Uterus (tissue), 4 donors: ENCODE measurements at regions of chr15 and their contacts with region 1.

Region 1: GRCh38 chr15:99704444-99704838 is 28.8 kb downstream of the LYSMD4 start:
- DNase-seq: peak in 1 of 2 donors; percentile 68
- H3K4me3 ChIP-seq: no peak overlapping the region
- H3K27ac ChIP-seq: peak overlapping the region; percentile 91 to 98
- H3K4me1 ChIP-seq: peaks cover 0 to 11% of the 10 kb centered on the region in 2 donors
- H3K27me3 ChIP-seq: no peaks in the 10 kb centered on the region
- CTCF ChIP-seq: peak; percentile 62 to 93 (median 79)
- POLR2A ChIP-seq: no peak

Region 2: GRCh38 chr15:99565299-99566156 is 138.9 kb before region 1 on chr15 and contains the start of gene MEF2A:
- intact Hi-C with region 1: loop called (anchors 10 kb)
- DNase-seq: peak; percentile 95
- H3K4me3 ChIP-seq: peak within 1 kb of the TSS; percentile 66 to 83
- H3K27ac ChIP-seq: peak within 1 kb of the TSS; percentile 98 to 99
- H3K4me1 ChIP-seq: peaks cover 0 to 3% of the 10 kb centered on the region in 2 donors
- H3K27me3 ChIP-seq: no peaks in the 10 kb centered on the region
- CTCF ChIP-seq: peak in 1 of 4 experiments; percentile 21
- POLR2A ChIP-seq: peak; percentile 64 to 94
- total RNA-seq, gene MEF2A: 78.6 to 138 (median 105) TPM